ENCODE measurements at regions of chr17 and their contacts with region 1.

Region 1: DNA sequence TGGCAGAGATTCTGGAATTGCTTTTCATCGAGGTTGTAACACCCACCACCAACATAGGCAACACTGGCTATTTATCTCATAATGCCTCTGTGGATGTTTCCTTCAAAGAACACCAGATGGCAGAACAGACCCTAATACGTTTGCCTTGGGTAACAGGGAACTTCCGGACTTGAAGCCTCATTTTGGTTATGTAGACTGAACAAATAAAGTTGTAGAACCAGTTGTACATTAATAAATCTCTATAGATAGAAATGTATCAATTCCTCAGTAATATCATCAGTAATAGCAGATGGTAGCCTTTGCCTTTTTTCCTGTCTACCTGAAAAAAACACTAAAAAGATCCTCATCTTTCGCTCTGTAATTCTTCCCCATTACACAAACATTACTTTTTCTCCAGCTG is 25.9 kb upstream of the APOH start:
- DNase-seq: peak; percentile 26
- H3K4me3 Mint-ChIP-seq: no peak overlapping the region
- H3K27ac Mint-ChIP-seq: peak overlapping the region; percentile 76
- H3K4me1 Mint-ChIP-seq: peaks cover 20% of the 10 kb centered on the region
- H3K27me3 Mint-ChIP-seq: no peaks in the 10 kb centered on the region

Region 2: GRCh38 chr17:66230922-66231591 is 24.1 kb before region 1 on chr17:
- intact Hi-C with region 1: no loop called
- DNase-seq: no peak
- H3K4me3 Mint-ChIP-seq: no peak overlapping the region
- H3K27ac Mint-ChIP-seq: peak overlapping the region; percentile 19
- H3K4me1 Mint-ChIP-seq: no peaks in the 10 kb centered on the region
- H3K27me3 Mint-ChIP-seq: peaks cover 13% of the 10 kb centered on the region

Region 3: DNA sequence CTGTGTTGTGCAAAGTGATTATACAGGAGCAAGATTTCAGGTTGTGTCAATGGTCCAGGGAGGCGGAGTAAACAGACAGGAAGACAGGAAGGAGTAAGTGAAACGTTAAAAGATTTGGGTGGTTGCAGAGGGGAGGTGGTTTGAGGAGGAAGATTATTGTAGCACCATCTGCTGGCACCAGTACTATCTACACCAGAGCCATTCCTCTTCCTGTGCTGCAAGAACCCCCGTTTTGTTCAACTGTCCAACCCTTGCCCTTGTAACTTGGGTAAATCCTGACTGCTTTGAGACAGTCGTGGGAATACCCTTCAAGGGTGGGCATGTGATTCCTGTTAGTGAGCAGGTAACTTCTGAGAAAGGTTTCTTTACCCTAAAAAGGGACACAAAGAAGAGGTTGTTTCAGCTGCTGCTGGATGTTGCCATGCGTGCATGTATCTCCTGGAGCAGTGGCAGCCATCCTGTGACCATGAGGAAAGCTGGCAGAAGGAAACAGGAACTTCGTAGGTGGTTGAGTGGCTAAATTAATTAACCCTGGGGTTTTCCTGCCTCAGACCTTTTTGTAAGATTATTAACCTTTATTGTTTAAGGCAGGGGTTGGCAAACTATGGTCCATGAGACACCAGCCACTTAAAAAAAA is 171.4 kb after region 1 on chr17:
- intact Hi-C with region 1: loop called (anchors 1 kb)
- DNase-seq: peak; percentile 48
- H3K4me3 Mint-ChIP-seq: peak overlapping the region; percentile 23
- H3K27ac Mint-ChIP-seq: peak overlapping the region; percentile 66
- H3K4me1 Mint-ChIP-seq: peaks cover 65% of the 10 kb centered on the region
- H3K27me3 Mint-ChIP-seq: no peaks in the 10 kb centered on the region

Region 4: DNA sequence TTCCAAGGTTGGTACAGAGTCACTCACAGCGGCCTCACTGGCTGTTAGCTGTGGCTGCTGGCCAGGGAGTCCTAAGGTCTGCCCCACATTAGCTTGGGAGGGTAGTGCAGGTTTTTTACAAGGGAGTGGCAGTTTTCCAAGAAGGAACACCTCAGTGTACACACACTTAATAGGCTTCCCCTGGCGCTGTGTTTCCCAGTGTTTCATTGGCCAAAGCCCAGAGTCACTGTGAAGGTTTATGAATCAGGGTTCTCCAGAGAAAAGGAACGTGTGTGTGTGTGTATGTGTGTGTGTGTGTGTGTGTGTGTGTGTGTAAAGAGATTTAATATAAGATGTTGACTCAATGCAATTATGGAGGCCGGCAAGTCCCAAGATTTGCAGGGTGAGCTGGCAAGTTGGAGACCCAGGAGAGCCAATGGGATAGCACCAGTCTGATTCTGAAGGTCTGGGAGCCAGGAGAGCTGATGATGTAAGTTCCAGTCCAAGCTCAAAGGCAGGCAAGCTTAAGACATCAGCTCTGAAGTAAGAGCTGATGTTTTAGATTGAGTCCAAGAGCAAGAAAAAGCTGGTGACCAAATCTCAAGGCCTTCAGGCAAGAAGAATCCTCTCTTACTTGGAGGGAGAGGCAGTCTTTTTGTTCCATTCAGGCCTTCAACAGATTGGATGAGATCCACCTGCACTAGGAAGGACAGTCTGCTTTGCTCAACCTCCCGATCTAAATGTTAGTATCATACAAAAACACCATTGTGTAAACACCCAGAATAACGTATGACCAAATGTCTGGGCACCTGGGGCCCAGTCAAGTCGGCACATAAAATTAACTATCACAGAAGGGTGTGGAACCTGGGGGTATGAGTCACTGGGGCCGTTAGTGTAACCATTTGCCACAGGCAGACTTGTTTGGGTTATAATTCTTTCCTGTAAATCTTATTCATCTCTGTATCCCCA is 254.1 kb after region 1 on chr17:
- intact Hi-C with region 1: loop called (anchors 1 kb)
- DNase-seq: peak; percentile 29
- H3K4me3 Mint-ChIP-seq: peak overlapping the region; percentile 77
- H3K27ac Mint-ChIP-seq: peak overlapping the region; percentile 97
- H3K4me1 Mint-ChIP-seq: peaks cover 82% of the 10 kb centered on the region
- H3K27me3 Mint-ChIP-seq: no peaks in the 10 kb centered on the region

Region 5: DNA sequence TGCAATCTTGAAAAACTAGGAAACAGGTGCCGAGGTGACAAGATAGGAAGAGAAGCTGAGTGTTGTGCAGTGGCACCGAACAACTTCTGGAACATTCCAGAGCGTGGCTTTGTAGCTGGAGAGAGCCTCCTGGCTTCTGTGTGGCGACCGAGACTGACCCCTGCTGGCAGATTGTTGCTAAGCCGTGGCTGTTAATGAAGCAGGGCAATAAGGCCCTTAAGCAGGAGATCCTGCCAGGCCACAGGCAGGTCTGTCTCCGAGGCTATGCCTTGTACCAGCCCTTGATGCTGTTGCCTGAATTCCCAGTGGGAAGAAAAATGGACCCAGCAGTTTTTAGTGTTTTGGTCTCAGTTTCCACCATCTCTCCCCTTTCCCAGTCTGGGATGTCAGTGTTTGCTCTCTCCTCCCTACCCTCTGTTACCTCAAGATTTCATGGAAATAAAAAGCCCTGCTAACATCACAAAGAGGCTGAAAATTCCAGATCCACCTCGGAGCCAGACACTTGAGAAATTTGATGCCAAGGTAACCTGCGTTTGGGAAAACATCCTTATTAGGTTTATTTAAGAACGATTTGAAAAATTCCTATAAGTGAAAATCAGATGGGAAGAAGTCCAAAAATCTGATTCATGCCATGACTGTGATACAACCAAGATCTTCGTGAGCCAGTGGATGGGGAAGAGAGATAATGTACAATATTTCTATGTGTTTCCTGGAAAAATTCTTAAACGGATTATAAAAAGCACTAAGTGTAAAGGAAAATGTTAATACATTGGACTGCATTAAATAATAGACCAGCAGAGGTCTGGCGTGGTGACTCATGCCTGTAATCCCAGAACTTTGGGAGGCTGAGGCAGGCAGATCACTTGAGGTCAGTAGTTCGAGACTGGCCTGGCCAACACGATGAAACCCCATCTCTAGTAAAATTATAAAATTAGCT is 312.4 kb after region 1 on chr17:
- intact Hi-C with region 1: loop called (anchors 1 kb)
- DNase-seq: peak; percentile 63
- H3K4me3 Mint-ChIP-seq: no peak overlapping the region
- H3K27ac Mint-ChIP-seq: peak overlapping the region; percentile 25
- H3K4me1 Mint-ChIP-seq: peaks cover 37% of the 10 kb centered on the region
- H3K27me3 Mint-ChIP-seq: no peaks in the 10 kb centered on the region

Region 6: GRCh38 chr17:66625311-66625775 is 370.2 kb after region 1 on chr17:
- intact Hi-C with region 1: loop called (anchors 1 kb)
- DNase-seq: no peak
- H3K4me3 Mint-ChIP-seq: no peak overlapping the region
- H3K27ac Mint-ChIP-seq: no peak overlapping the region
- H3K4me1 Mint-ChIP-seq: peaks cover 42% of the 10 kb centered on the region
- H3K27me3 Mint-ChIP-seq: no peaks in the 10 kb centered on the region

Region 7: DNA sequence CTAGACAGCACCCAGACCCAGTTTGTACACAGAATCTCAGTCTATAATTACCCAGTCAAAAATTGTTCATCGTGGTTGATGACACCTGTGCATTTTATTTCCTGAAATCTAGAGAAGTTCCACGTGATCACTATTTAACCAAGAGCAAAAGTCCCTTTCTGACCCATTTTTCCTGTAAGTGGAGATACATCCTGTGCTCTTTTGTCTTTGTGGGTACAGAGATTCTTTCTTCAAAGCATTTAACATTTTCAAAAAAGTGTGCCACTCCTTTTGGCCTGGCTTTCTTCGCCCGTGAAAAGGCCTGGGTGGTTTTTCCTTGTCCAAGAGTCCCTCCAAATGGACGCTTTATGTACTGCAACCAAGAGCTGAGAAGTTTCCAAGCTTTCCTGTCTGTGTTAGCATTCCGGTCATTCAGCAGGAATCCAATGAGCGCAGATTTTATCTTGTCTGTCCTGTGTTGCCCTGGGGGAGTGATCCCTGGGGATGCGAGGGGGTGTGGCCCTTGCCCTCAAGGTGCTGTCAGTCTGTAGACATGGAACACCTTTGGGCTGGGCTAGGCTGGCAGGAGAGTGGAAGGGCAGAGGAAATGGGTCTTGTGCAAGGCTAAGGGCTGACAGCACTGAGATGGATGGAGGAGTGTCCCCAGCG is 418.7 kb after region 1 on chr17:
- intact Hi-C with region 1: loop called (anchors 1 kb)
- DNase-seq: peak; percentile 44
- H3K4me3 Mint-ChIP-seq: peak overlapping the region; percentile 51
- H3K27ac Mint-ChIP-seq: peak overlapping the region; percentile 84
- H3K4me1 Mint-ChIP-seq: peaks cover 70% of the 10 kb centered on the region
- H3K27me3 Mint-ChIP-seq: no peaks in the 10 kb centered on the region

Region 8: DNA sequence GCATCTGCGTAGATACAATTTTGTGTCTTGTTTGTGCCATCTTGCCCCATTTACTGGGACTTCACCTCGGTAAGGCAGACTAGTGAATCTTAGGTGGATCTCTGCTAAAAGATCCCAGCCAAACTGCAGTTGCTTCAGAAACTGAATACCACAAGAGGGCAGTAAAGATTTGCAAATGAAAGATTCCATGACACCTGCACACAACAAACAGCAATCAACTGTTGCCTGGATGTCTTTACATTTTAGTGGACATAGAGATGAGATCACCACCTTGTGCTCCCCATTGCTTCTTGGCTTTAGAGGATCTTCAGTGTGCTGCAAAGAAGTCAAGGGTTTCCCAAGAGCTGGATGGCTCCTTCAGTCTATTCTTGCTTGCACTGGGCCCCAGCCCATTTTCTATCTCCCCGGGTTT is 460.6 kb after region 1 on chr17:
- intact Hi-C with region 1: loop called (anchors 1 kb)
- DNase-seq: no peak
- H3K4me3 Mint-ChIP-seq: no peak overlapping the region
- H3K27ac Mint-ChIP-seq: peak overlapping the region; percentile 72
- H3K4me1 Mint-ChIP-seq: peaks cover 54% of the 10 kb centered on the region
- H3K27me3 Mint-ChIP-seq: no peaks in the 10 kb centered on the region

Measured in activated T-helper 1 cell treated with anti-CD3 and anti-CD28 coated beads, Interleukin-12 subunit alpha, Interleukin-12 subunit beta, Interleukin-2, Interleukin-4 antibody, amounts not matched to agents 30 ng/mL and 10 ng/mL and 1 ng/mL, durations not matched to agents 14 hours and 24 hours and 36 hours (primary cell).